HepG2 (cell line): ENCODE measurements at regions of chr1 and their contacts with region 1.

Region 1: DNA sequence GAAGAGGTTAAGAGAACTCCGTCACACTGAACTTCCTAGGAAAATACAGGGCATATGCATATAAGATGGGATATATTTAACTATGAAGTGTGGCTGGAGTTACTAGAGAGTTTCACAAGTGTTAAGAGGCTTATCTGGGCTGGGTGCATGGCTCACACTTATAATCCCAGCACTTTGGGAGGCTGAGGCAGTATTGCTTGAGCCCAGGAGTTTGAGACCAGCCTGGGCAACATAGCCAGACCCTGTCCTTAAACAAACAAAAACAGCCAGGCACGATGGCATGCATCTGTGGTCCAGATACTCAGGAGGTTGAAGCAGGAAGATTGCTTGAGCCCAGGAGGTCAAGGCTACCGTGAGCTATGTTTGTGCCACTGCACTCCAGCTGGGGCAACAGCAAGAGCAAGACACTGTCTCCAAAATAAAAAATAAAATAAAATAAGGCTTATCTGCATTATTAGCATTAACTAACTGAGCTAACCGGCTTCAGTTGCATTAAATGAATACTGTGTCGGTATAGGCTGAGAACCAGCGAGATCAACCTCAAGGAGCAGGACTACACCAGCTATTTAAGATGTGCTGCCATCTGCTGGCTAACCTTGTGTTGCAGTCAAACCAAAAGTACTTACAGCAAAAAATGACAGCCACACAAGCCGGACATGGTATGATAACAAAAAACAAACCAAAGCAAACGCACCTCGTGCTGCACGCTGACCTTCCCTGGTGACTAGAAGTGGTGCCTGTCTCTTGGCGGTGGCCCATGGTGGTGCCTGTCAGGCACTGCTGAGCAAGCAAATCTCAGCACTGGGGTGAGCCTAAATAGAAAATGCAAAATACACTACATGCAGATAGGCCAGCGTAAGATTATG is 19.7 kb upstream of the RBBP5 start:
- DNase-seq: peak; percentile 66
- ATAC-seq: peak; percentile 79
- H3K4me3 ChIP-seq: peak overlapping the region in 1 of 3 experiments; percentile 32; a peak in 1 of 6 replicates
- H3K27ac ChIP-seq: no peak overlapping the region
- H3K4me1 ChIP-seq: peaks cover 25% of the 10 kb centered on the region
- H3K27me3 ChIP-seq: no peaks in the 10 kb centered on the region
- CTCF ChIP-seq: peak; percentile 82
- EP300 ChIP-seq: no peak
- POLR2A ChIP-seq: no peak
- RAD21 ChIP-seq: 0 out of 2 replicates have a peak, but pooled peaks have one; percentile 29

Region 2: GRCh38 chr1:204989266-204990058 is 152.0 kb before region 1 on chr1:
- CTCF ChIA-PET with region 1: interaction called, 6 read pairs
- POLR2A ChIA-PET with region 1: no interaction called
- in situ Hi-C with region 1: no loop called
- intact Hi-C with region 1: loop called (anchors 5 kb)
- DNase-seq: peak; percentile 46
- ATAC-seq: peak; percentile 86
- H3K4me3 ChIP-seq: no peak overlapping the region
- H3K27ac ChIP-seq: no peak overlapping the region
- H3K4me1 ChIP-seq: peaks cover 4% of the 10 kb centered on the region; the same call in 1 of the 2 replicates
- H3K27me3 ChIP-seq: peaks cover 14 to 70% of the 10 kb centered on the region in 2 experiments
- CTCF ChIP-seq: peak; percentile 95
- EP300 ChIP-seq: no peak
- POLR2A ChIP-seq: no peak
- RAD21 ChIP-seq: peak; percentile 91

Region 3: DNA sequence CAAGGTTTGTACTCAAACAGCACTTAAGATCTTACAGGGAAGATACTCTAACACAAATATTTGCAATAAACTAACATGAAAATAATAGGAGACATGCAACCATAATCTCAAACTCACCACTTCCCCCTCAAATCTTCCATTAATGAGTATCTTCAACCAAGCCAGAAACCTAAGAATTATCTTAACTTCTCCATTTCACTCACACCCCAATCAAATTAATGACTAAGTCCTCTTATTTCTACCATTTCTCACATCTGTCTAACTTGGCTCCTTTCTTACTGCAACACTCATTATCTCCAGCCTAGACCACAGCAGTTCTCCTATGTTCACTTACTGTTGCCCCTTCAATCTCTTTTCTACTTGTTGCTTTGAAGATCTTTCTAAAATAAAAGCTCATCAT is 30.1 kb before region 1 on chr1:
- CTCF ChIA-PET with region 1: no interaction called
- POLR2A ChIA-PET with region 1: no interaction called
- in situ Hi-C with region 1: no loop called
- intact Hi-C with region 1: no loop called
- DNase-seq: no peak
- ATAC-seq: no peak
- H3K4me3 ChIP-seq: no peak overlapping the region
- H3K27ac ChIP-seq: no peak overlapping the region
- H3K4me1 ChIP-seq: no peaks in the 10 kb centered on the region
- H3K27me3 ChIP-seq: no peaks in the 10 kb centered on the region
- CTCF ChIP-seq: no peak
- EP300 ChIP-seq: no peak
- POLR2A ChIP-seq: no peak
- RAD21 ChIP-seq: no peak

Region 4: DNA sequence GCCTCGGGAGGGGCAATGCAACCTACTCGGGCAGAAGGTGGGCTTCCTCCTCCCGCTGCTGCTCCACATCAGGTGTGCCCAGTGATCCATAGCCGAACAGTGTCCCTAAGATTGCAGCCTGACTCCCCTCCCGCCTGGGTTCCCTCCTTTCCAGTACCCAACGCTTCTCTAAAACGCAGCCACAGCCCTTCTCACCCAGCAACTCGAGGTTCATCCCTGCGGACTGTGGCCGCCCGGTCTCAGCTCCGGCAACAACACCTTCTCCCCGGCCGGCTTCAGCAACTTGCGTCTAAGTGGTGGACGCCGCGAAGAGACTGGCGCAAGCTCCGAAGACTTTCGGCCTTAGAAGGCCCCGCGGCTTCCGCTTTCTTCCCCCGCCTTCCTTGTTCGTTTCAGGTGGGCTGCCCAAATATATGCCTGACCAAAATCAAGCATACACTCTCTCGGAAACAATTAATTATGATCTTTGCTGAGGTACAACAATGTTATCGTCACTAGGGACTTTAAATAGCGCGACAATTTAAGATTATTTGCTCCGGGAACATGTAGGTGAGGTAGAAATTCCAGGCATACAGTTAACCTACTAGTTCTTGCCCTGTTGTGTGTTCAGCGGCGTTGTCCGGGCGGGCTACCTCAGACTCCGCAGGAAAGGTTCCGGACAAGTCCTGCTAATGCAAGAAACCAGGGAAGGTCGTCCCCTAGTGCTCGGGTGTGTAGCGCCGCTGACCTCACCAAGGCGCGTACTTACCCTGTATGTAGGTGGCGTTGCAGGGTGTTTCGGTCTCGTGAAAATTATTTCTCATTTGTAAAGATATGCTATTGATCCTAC is 19.6 kb before region 1 on chr1 and contains the start of gene RBBP5:
- CTCF ChIA-PET with region 1: interaction called, 3 read pairs
- POLR2A ChIA-PET with region 1: interaction called, 9 read pairs
- in situ Hi-C with region 1: no loop called
- intact Hi-C with region 1: loop called (anchors 1 kb)
- DNase-seq: peak; percentile 94
- ATAC-seq: peak; percentile 99
- H3K4me3 ChIP-seq: peak within 1 kb of the TSS; percentile 85 to 95 (median 85)
- H3K27ac ChIP-seq: peak within 1 kb of the TSS; percentile 94
- H3K4me1 ChIP-seq: peaks cover 31% of the 10 kb centered on the region
- H3K27me3 ChIP-seq: no peaks in the 10 kb centered on the region; a peak in 1 of 5 replicates
- CTCF ChIP-seq: peak; percentile 92
- EP300 ChIP-seq: peak; percentile 50 to 53; a peak in 2 of 4 replicates
- POLR2A ChIP-seq: peak; percentile 86 to 89
- RAD21 ChIP-seq: peak; percentile 64
- total RNA-seq, gene RBBP5: 17.1 and 26.2 TPM in 2 replicates

Region 5: DNA sequence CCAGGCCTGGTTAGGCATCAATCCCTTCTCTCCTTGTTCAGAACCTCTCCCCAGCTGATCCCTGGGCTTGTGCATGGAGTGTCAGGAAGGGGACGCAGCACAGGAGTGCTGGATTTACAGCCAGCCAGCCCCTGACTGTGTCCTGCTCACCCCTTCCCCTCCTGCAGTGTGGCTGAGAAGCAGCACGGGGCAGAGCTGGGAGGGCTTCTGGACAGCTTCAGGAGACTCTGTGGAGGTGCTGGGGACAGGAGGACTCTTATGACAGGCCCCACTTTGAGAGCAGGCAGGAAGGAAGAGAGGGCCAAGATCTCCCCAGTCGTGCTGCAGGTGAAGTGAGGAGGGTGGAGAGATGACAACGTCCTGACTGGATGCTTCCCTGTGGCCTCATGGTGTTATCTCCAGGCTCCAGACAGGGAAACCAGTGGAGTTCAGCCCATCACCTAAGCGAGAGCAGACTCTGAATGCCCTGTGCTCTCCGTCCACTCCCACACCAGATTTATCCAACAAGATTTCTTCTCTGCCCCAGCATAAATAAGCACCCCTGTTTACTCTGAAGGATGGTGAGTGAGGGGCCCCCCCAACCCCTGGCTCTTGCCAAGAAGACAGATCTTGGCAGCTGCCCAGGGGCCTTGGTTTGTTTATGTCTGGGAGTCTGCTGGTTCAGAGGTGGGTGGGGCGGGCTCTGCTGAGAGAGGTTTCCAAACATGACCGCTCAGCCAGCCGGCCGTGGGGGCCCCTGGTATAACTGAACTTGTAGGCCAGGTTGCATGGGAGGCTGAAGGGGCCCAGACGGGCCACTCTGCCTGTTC is 107.5 kb after region 1 on chr1:
- CTCF ChIA-PET with region 1: no interaction called
- POLR2A ChIA-PET with region 1: no interaction called
- in situ Hi-C with region 1: no loop called
- intact Hi-C with region 1: no loop called
- DNase-seq: no peak
- ATAC-seq: peak; percentile 56
- H3K4me3 ChIP-seq: no peak overlapping the region
- H3K27ac ChIP-seq: no peak overlapping the region
- H3K4me1 ChIP-seq: peaks cover 11% of the 10 kb centered on the region
- H3K27me3 ChIP-seq: peaks cover 5 to 56% of the 10 kb centered on the region in 2 experiments
- CTCF ChIP-seq: no peak
- EP300 ChIP-seq: no peak
- POLR2A ChIP-seq: no peak
- RAD21 ChIP-seq: no peak